ENCODE measurements at regions of chr14 and their contacts with region 1.

Region 1: DNA sequence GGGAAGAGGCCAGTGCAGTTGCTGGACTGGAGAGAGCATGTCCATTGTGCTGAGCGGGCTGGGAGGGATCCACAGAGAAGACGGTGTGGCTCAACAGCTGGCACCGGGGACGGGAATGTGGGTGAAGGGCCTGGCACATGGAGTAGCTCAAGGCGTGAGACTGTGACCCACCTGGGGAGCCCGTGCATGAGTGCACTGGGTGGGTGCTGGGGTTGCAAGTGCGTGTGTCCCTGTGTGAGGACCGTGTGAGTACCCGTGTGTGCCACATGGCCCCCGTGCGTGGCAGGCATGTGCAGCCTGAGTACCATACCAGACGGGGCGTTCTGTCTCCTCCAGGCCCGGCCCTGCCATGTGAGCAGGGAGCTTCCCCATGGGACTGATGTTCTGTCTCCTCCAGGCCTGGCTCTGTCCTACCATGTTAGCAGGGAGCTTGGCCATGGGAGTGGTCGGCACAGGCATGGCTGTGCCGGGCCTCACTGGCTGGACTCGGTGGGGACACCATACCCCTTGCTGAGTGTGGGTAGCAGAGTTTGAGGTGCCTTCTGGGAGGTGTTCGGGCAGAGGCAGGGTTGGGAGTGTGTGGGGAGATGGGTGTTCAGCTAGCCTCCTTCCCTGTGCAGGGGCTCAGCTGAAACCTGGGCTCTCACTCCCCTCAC is 234.4 kb downstream of the TMEM121 start:
- DNase-seq: peak in 1 of 2 donors; percentile 96
- H3K4me3 ChIP-seq: no peak overlapping the region
- H3K27ac ChIP-seq: no peak overlapping the region
- H3K4me1 ChIP-seq: no peaks in the 10 kb centered on the region
- H3K27me3 ChIP-seq: no peaks in the 10 kb centered on the region
- CTCF ChIP-seq: no peak
- POLR2A ChIP-seq: no peak

Region 2: GRCh38 chr14:103801459-103801858 is 1959.4 kb before region 1 on chr14:
- intact Hi-C with region 1: no loop called
- DNase-seq: no peak
- H3K4me3 ChIP-seq: no peak overlapping the region
- H3K27ac ChIP-seq: no peak overlapping the region
- H3K4me1 ChIP-seq: no peaks in the 10 kb centered on the region
- H3K27me3 ChIP-seq: no peaks in the 10 kb centered on the region
- CTCF ChIP-seq: no peak
- POLR2A ChIP-seq: no peak

Region 3: GRCh38 chr14:105617201-105617777 is 143.5 kb before region 1 on chr14:
- intact Hi-C with region 1: loop called (anchors 2 kb)
- DNase-seq: no peak
- H3K4me3 ChIP-seq: no peak overlapping the region
- H3K27ac ChIP-seq: no peak overlapping the region
- H3K4me1 ChIP-seq: no peaks in the 10 kb centered on the region
- H3K27me3 ChIP-seq: no peaks in the 10 kb centered on the region
- CTCF ChIP-seq: no peak
- POLR2A ChIP-seq: no peak

Region 4: GRCh38 chr14:105773995-105774394 is 13.2 kb after region 1 on chr14:
- intact Hi-C with region 1: no loop called
- DNase-seq: peak in 1 of 2 donors; percentile 80
- H3K4me3 ChIP-seq: no peak overlapping the region
- H3K27ac ChIP-seq: no peak overlapping the region
- H3K4me1 ChIP-seq: no peaks in the 10 kb centered on the region
- H3K27me3 ChIP-seq: no peaks in the 10 kb centered on the region
- CTCF ChIP-seq: no peak
- POLR2A ChIP-seq: no peak

Region 5: DNA sequence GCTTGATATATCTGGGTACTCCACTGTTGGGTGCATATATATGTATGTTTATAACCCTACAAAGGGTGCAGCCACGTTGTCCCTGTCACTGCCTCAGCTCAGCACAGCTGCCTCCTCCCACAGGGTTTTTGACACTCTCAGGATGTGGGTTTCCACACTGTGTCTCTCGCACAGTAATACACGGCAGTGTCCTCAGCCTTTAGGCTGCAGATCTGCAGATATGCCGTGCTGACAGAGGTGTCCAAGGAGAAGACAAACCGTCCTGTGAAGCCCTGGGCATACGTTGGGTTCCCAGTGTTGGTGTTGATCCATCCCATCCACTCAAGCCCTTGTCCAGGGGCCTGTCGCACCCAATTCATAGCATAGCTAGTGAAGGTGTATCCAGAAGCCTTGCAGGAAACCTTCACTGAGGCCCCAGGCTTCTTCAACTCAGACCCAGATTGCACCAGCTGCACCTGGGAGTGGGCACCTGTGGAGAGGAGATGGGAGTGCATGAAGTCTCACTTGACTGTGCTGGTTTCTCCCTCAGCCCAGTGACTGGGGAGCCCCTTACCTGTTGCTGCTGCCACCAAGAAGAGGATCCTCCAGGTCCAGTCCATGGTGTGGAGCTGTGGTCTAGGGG is 264.3 kb after region 1 on chr14:
- intact Hi-C with region 1: no loop called
- DNase-seq: no peak
- H3K4me3 ChIP-seq: no peak overlapping the region
- H3K27ac ChIP-seq: no peak overlapping the region
- H3K4me1 ChIP-seq: no peaks in the 10 kb centered on the region
- H3K27me3 ChIP-seq: no peaks in the 10 kb centered on the region
- CTCF ChIP-seq: no peak
- POLR2A ChIP-seq: no peak